Transverse colon (tissue), 4 donors: ENCODE measurements at regions of chr1 and their contacts with region 1.

Region 1: GRCh38 chr1:15825800-15826199 is 18.4 kb upstream of the UQCRHL start:
- DNase-seq: no peak
- H3K4me3 ChIP-seq: no peak overlapping the region
- H3K27ac ChIP-seq: peak overlapping the region in 1 of 4 donors; percentile 38
- H3K4me1 ChIP-seq: peaks cover 7 to 31% (median 12%) of the 10 kb centered on the region in 4 donors
- H3K27me3 ChIP-seq: no peaks in the 10 kb centered on the region
- CTCF ChIP-seq: no peak
- EP300 ChIP-seq: no peak
- POLR2A ChIP-seq: no peak

Region 2: GRCh38 chr1:15975805-15976680 is 150.2 kb after region 1 on chr1 and contains the start of gene ZBTB17:
- in situ Hi-C with region 1: loop called in 3 of 4 experiments (anchors 10 to 25 kb)
- intact Hi-C with region 1: no loop called
- DNase-seq: peak; percentile 96
- H3K4me3 ChIP-seq: peak within 1 kb of the TSS; percentile 59 to 95 (median 80)
- H3K27ac ChIP-seq: peak within 1 kb of the TSS; percentile 80 to 89 (median 86)
- H3K4me1 ChIP-seq: peaks cover 6 to 17% (median 11%) of the 10 kb centered on the region in 4 donors
- H3K27me3 ChIP-seq: no peaks in the 10 kb centered on the region
- CTCF ChIP-seq: peak in 1 of 5 experiments; percentile 26
- EP300 ChIP-seq: no peak
- POLR2A ChIP-seq: peak; percentile 81
- total RNA-seq, gene ZBTB17: 33.3 to 113 (median 50.5) TPM

Region 3: DNA sequence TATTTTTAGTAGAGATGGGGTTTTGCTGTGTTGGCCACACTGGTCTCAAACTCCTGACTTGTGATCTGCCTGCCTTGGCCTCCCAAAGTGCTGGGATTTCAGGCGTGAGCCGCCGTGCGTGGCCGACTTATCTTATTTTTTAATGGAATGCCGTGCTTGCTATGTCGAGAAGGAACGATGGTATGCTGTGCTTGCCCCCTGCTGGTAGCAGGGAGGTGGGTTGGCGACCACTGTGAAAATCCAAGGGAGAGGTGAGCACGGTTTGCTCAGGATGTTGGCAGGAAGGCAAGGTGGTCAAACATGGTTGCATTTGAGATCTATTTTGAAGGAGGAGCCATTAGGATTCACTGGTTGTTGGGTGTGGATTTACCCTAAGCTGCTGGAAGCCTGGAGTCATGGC is 1659.5 kb after region 1 on chr1:
- in situ Hi-C with region 1: no loop called
- intact Hi-C with region 1: no loop called
- DNase-seq: no peak
- H3K4me3 ChIP-seq: no peak overlapping the region
- H3K27ac ChIP-seq: no peak overlapping the region
- H3K4me1 ChIP-seq: no peaks in the 10 kb centered on the region
- H3K27me3 ChIP-seq: peaks cover 6% of the 10 kb centered on the region
- CTCF ChIP-seq: peak in 1 of 5 experiments; percentile 46
- EP300 ChIP-seq: no peak
- POLR2A ChIP-seq: no peak